GM10248 (cell line): ENCODE measurements at regions of chr11 and their contacts with region 1.

Region 1: GRCh38 chr11:122853971-122854446 is 15.7 kb downstream of the CRTAM start:
- DNase-seq: peak; percentile 56
- CTCF ChIP-seq: peak; percentile 62

Region 2: GRCh38 chr11:122578168-122578825 is 275.7 kb before region 1 on chr11:
- CTCF ChIA-PET with region 1: interaction called, 17 read pairs
- POLR2A ChIA-PET with region 1: no interaction called
- DNase-seq: no peak
- CTCF ChIP-seq: no peak

Region 3: GRCh38 chr11:122781378-122782195 is 72.4 kb before region 1 on chr11:
- CTCF ChIA-PET with region 1: interaction called, 42 read pairs
- POLR2A ChIA-PET with region 1: no interaction called
- DNase-seq: peak; percentile 82
- CTCF ChIP-seq: peak; percentile 86

Region 4: DNA sequence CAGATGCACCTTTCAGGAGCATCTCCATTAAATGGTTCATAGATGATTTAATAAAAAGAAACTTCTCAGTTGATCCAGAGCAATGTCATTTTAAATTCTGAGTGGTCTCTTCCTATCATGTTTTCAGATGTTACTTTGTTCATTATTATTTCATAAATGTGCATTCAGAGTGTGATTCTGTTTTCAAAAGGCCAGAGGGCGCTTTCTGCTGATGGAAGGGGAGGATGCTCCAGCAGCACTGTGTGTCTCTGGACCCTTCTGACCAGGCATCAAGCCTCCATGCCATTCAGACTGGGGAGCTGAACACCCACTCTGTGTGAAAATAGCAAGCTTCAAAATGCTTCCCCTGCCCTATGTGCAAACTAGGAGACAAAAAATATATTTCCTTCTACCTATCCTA is 39.6 kb before region 1 on chr11:
- CTCF ChIA-PET with region 1: interaction called, 38 read pairs
- POLR2A ChIA-PET with region 1: no interaction called
- DNase-seq: no peak
- CTCF ChIP-seq: peak; percentile 34

Region 5: GRCh38 chr11:122843281-122844141 is 10.5 kb before region 1 on chr11:
- CTCF ChIA-PET with region 1: interaction called, 22 read pairs
- POLR2A ChIA-PET with region 1: no interaction called
- DNase-seq: peak; percentile 26
- CTCF ChIP-seq: no peak

Region 6: GRCh38 chr11:123054301-123055065 is 200.5 kb after region 1 on chr11:
- CTCF ChIA-PET with region 1: interaction called, 31 read pairs
- POLR2A ChIA-PET with region 1: interaction called, 5 read pairs
- DNase-seq: peak; percentile 76
- CTCF ChIP-seq: peak; percentile 65